Activated CD8-positive, alpha-beta T cell treated with anti-CD3 and anti-CD28 coated beads for 36 hours (primary cell): ENCODE measurements at regions of chr2 and their contacts with region 1.

Region 1: DNA sequence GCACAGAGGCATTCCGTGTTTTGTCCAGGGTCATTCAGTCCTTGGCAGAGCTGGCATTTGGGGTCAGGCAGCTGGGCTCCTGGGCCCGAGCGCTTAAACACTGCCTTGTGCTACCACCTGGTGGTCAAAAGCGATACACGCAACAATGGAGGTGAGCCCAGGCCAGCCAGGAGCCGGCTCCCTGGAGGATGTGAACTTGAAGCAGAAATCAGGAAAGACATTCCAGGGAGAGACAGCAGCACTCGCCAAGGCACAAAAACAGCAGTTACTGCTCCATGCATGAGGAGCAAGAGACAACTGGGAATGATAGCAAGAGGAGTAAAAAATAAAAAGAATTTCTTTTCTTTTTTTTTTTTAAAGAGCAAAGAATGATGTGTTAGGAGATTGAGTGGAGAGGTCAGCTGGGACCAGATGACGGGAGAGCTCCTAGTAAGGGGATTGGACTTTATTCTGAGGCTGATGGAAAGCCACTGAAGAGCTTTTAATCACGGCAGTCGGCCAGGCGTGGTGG is 20.7 kb downstream of the SCYGR8 start:
- DNase-seq: peak; percentile 72
- ATAC-seq: peak; percentile 94
- H3K4me3 Mint-ChIP-seq: no peak overlapping the region
- H3K27ac Mint-ChIP-seq: no peak overlapping the region
- H3K4me1 Mint-ChIP-seq: no peaks in the 10 kb centered on the region
- H3K27me3 Mint-ChIP-seq: no peaks in the 10 kb centered on the region
- CTCF ChIP-seq: peak; percentile 86

Region 2: GRCh38 chr2:227132986-227133385 is 633.4 kb before region 1 on chr2:
- CTCF ChIA-PET with region 1: interaction called, 12 read pairs
- POLR2A ChIA-PET with region 1: no interaction called
- intact Hi-C with region 1: loop called (anchors 10 kb)
- DNase-seq: no peak
- ATAC-seq: no peak
- H3K4me3 Mint-ChIP-seq: no peak overlapping the region
- H3K27ac Mint-ChIP-seq: no peak overlapping the region
- H3K4me1 Mint-ChIP-seq: no peaks in the 10 kb centered on the region
- H3K27me3 Mint-ChIP-seq: peaks cover 6% of the 10 kb centered on the region
- CTCF ChIP-seq: no peak

Region 3: GRCh38 chr2:227406177-227407031 is 360.0 kb before region 1 on chr2:
- CTCF ChIA-PET with region 1: interaction called, 18 read pairs
- POLR2A ChIA-PET with region 1: no interaction called
- intact Hi-C with region 1: loop called (anchors 10 kb)
- DNase-seq: peak; percentile 37
- ATAC-seq: no peak
- H3K4me3 Mint-ChIP-seq: no peak overlapping the region
- H3K27ac Mint-ChIP-seq: no peak overlapping the region
- H3K4me1 Mint-ChIP-seq: peaks cover 50% of the 10 kb centered on the region
- H3K27me3 Mint-ChIP-seq: no peaks in the 10 kb centered on the region
- CTCF ChIP-seq: peak; percentile 70

Region 4: GRCh38 chr2:227617316-227618230 is 148.9 kb before region 1 on chr2 and contains the start of gene SCYGR4:
- CTCF ChIA-PET with region 1: no interaction called
- POLR2A ChIA-PET with region 1: no interaction called
- intact Hi-C with region 1: no loop called
- DNase-seq: no peak
- ATAC-seq: no peak
- H3K4me3 Mint-ChIP-seq: no peak within 1 kb of the TSS
- H3K27ac Mint-ChIP-seq: no peak within 1 kb of the TSS
- H3K4me1 Mint-ChIP-seq: no peaks in the 10 kb centered on the region
- H3K27me3 Mint-ChIP-seq: peaks cover 13% of the 10 kb centered on the region
- CTCF ChIP-seq: no peak
- total RNA-seq, gene SCYGR4: not detected

Region 5: DNA sequence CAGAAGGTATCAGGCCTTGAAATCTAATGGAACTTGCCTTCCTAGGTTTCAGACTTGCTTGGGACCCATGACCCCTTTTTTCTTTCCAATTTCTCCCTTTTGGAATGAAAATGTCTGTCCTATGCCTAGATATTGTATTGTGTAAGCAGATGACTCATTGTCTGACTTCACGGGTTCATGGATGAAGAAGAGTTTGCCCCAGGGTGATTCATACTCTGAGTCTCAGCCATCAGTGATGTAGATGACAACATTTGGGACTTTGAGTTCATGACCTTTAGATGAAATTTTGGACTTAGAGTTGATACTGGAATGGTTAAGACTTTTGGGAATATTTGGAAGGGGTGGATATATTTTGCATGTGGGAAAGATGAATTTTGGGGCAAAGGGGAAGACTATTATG is 111.0 kb before region 1 on chr2:
- CTCF ChIA-PET with region 1: interaction called, 65 read pairs
- POLR2A ChIA-PET with region 1: no interaction called
- intact Hi-C with region 1: loop called (anchors 5 kb)
- DNase-seq: no peak
- ATAC-seq: peak; percentile 55
- H3K4me3 Mint-ChIP-seq: no peak overlapping the region
- H3K27ac Mint-ChIP-seq: no peak overlapping the region
- H3K4me1 Mint-ChIP-seq: no peaks in the 10 kb centered on the region
- H3K27me3 Mint-ChIP-seq: peaks cover 6% of the 10 kb centered on the region
- CTCF ChIP-seq: no peak

Region 6: DNA sequence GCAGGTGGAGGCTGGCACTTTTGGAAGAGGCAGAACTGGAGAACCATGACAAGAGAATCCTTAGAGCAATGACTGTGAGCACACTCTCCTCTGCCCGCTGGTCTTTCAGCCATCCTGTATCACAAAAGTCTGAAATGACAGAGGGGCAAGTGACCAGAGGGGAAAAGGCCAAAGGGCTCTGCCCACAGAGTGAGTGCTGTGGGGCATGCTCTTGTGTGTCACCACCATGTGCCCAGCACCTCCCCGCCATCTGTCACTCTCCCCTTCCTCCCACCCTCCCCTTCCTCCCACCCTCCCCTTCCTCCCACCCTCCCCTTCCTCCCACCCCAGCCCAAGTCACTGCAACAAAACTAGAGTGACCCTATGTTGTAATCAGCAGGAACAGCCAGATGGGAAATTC is 137.0 kb after region 1 on chr2:
- CTCF ChIA-PET with region 1: no interaction called
- POLR2A ChIA-PET with region 1: no interaction called
- intact Hi-C with region 1: no loop called
- DNase-seq: no peak
- ATAC-seq: no peak
- H3K4me3 Mint-ChIP-seq: no peak overlapping the region
- H3K27ac Mint-ChIP-seq: no peak overlapping the region
- H3K4me1 Mint-ChIP-seq: no peaks in the 10 kb centered on the region
- H3K27me3 Mint-ChIP-seq: peaks cover 7% of the 10 kb centered on the region
- CTCF ChIP-seq: no peak